Activated CD4-positive, alpha-beta memory T cell treated with anti-CD3 and anti-CD28 coated beads, Interleukin-2, amount 10 ng/mL, durations not matched to agents 7 days and 5 days (primary cell): ENCODE measurements at regions of chr18 and their contacts with region 1.

Region 1: DNA sequence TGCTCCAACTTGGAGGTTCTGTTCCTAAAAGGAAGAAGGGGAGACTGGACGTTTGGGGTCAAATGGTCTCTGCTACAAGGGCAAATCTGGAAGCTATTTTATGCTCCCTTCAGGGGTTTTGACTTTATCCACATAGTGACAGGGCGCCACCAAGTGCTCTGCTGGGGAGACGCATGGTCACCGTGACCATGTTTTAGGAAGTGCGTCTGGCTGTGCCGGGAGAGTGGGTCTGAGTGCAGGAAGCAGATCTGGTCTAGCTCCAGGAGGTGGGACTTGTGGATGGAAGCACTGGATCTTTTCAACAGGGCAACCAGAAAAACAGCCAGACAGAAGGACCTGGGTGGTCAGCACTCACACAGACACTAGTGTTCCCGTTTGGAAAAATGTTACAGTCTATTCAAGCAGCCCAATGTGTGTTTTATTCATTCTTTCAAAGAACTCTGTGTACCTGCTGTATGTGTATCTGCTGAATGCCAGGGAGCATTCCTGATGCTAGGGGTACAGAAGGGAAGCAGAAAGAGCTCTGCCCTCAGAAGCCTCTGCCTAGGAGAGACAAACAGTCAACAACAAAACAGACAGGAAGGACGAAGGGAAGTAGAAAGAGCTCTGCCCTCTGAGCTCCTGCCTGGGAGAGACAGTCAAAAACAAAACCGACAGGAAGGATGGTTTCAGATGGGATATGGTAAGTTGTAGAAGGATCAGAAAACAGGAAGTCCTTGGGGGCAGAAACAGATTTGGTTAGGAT is 14.3 kb downstream of the IMPA2 start:
- DNase-seq: peak; percentile 60
- H3K4me3 Mint-ChIP-seq: no peak overlapping the region
- H3K27ac Mint-ChIP-seq: peak overlapping the region; percentile 50
- H3K4me1 Mint-ChIP-seq: peaks cover 23% of the 10 kb centered on the region
- H3K27me3 Mint-ChIP-seq: no peaks in the 10 kb centered on the region

Region 2: GRCh38 chr18:11733031-11733430 is 262.6 kb before region 1 on chr18:
- CTCF ChIA-PET with region 1: interaction called, 11 read pairs
- POLR2A ChIA-PET with region 1: no interaction called
- DNase-seq: peak; percentile 73
- H3K4me3 Mint-ChIP-seq: peak overlapping the region; percentile 11
- H3K27ac Mint-ChIP-seq: no peak overlapping the region
- H3K4me1 Mint-ChIP-seq: no peaks in the 10 kb centered on the region
- H3K27me3 Mint-ChIP-seq: peaks cover 25% of the 10 kb centered on the region

Region 3: GRCh38 chr18:11937874-11938478 is 57.6 kb before region 1 on chr18:
- CTCF ChIA-PET with region 1: interaction called, 197 read pairs
- POLR2A ChIA-PET with region 1: interaction called, 11 read pairs
- DNase-seq: peak; percentile 76
- H3K4me3 Mint-ChIP-seq: no peak overlapping the region
- H3K27ac Mint-ChIP-seq: no peak overlapping the region
- H3K4me1 Mint-ChIP-seq: no peaks in the 10 kb centered on the region
- H3K27me3 Mint-ChIP-seq: no peaks in the 10 kb centered on the region

Region 4: GRCh38 chr18:11947214-11948191 is 48.1 kb before region 1 on chr18:
- CTCF ChIA-PET with region 1: interaction called, 18 read pairs
- POLR2A ChIA-PET with region 1: interaction called, 3 read pairs
- DNase-seq: peak; percentile 56
- H3K4me3 Mint-ChIP-seq: peak overlapping the region; percentile 53
- H3K27ac Mint-ChIP-seq: peak overlapping the region; percentile 48
- H3K4me1 Mint-ChIP-seq: peaks cover 21% of the 10 kb centered on the region
- H3K27me3 Mint-ChIP-seq: no peaks in the 10 kb centered on the region

Region 5: DNA sequence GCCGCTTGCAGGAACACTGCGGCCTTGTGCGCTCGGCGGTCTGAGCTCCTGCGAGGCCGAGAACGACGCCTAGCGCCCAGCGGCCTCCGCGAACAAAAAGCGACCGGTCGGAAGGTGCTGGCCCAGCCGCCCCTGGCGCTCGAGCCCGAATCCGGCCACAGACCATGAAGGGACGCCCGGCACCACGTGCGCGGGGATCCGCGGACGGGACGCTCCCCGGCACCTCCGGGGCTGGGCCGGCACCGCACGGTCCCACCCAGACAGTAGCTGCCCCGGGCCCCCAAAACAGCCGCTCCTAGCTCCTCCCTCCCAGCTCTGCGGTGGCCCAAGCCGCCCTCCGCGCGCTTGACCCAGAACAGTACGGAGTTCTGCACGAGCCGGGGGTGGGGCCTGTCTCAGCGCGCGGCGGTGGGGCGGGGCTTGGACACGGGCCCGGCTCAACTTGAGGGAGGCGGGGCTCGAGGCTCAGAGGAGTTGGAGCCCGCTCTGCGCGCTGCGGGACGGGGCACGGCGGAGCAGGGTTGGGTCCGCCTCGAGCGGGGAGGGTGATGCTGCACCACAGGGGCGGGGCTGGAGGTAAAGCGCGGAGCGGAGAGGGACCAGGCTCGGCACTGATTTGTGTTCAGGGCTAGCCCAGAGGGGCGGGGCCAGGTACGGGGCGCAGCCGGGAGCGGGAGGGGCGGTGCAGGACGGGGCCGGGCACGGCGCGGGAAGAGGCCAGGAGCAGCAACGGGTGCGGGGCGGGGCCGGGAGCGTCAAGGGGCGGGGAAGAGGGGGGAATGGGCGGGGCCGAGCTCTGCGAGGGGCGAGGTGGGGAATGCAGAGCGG is 14.8 kb before region 1 on chr18:
- CTCF ChIA-PET with region 1: interaction called, 23 read pairs
- POLR2A ChIA-PET with region 1: interaction called, 20 read pairs
- DNase-seq: peak; percentile 98
- H3K4me3 Mint-ChIP-seq: peak overlapping the region; percentile 76
- H3K27ac Mint-ChIP-seq: peak overlapping the region; percentile 52
- H3K4me1 Mint-ChIP-seq: peaks cover 22% of the 10 kb centered on the region
- H3K27me3 Mint-ChIP-seq: peaks cover 5% of the 10 kb centered on the region

Region 6: DNA sequence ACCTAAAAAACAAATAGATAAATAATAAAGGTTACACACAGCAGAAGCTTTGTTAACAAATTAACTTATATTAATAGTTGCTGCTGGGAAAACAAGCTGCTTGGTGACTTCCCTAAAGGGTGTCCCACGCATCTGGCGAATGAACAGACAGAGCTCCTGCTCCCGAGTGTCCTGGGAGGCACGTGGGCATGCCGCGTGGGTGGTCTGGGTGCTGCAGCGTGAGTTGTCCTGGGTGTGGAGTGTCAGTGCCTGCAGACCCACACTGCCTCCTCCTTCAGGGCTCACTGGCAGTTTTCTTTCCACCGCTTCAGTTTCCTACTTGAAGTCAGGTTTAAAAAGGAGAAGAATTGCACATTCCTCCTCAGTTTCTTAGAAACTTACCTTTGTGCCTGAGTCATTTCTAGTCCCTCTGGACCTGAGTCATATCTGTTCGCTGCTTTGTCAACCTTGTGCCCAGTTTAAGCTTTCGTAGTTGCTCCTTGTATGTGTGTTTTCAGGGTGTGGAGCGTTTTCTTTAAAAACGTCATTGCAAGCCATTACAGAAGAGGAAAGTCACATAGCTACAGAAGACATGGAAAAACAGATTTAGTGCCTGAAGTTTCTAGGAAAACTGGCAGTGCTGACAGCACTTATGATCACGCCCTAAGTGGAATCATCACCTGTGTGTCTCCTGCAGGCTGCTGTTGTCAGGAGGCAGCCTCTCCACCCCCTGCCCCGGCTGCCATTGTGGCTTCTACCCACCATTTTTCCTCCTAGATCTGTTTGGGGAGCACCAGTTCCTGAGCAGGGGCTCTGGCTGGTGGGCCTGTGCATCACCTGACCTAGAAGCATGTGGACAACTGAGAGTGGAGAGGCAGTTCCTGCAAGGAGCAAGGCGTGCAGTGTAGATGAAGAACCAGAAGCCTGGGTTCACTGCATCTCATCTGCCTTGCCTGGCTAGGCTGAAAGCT is 10.2 kb after region 1 on chr18:
- CTCF ChIA-PET with region 1: interaction called, 15 read pairs
- POLR2A ChIA-PET with region 1: no interaction called
- DNase-seq: no peak
- H3K4me3 Mint-ChIP-seq: no peak overlapping the region
- H3K27ac Mint-ChIP-seq: no peak overlapping the region
- H3K4me1 Mint-ChIP-seq: peaks cover 9% of the 10 kb centered on the region
- H3K27me3 Mint-ChIP-seq: no peaks in the 10 kb centered on the region

Region 7: DNA sequence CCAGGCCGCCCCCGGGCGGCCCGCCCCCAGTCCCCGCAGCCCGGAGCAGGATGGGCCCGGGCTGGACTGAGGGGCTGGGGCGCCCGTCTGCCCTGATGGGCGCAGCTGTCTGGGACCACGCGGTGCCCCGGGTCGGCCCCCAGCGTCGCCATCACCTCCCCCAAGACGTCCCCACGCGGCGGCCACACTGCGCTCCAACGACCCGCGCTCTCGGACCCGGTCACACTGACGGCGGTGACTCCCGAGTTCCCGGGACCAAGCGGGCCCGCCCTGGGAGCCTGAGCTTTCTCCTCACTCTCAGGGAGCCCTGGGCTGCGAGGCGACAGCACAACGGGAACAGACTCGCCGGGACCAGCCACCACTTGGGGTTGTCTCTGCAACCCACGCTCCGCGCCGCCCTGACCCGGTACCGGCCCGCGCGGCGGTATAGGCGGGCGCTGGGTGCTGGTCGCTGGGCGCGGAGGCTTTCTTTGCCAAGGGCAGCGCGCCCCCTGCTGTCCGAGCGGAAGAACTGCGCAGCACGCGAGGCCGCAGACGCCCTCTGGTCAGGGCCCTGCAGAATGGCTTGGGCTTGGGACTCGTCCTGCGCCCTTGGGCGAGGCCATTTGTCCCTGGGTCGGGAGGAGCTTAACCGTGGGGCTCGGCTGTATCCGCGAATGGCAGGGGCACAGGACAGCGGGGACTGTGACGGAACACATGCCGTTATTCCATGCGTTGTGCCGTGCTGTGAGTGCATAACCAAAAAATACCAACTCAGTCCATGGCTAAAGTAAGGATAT is 43.2 kb after region 1 on chr18:
- CTCF ChIA-PET with region 1: interaction called, 13 read pairs
- POLR2A ChIA-PET with region 1: no interaction called
- DNase-seq: peak; percentile 74
- H3K4me3 Mint-ChIP-seq: peak overlapping the region; percentile 33
- H3K27ac Mint-ChIP-seq: no peak overlapping the region
- H3K4me1 Mint-ChIP-seq: peaks cover 20% of the 10 kb centered on the region
- H3K27me3 Mint-ChIP-seq: no peaks in the 10 kb centered on the region